IMR-90 (cell line): ENCODE measurements at regions of chr1 and their contacts with region 1.

Region 1: DNA sequence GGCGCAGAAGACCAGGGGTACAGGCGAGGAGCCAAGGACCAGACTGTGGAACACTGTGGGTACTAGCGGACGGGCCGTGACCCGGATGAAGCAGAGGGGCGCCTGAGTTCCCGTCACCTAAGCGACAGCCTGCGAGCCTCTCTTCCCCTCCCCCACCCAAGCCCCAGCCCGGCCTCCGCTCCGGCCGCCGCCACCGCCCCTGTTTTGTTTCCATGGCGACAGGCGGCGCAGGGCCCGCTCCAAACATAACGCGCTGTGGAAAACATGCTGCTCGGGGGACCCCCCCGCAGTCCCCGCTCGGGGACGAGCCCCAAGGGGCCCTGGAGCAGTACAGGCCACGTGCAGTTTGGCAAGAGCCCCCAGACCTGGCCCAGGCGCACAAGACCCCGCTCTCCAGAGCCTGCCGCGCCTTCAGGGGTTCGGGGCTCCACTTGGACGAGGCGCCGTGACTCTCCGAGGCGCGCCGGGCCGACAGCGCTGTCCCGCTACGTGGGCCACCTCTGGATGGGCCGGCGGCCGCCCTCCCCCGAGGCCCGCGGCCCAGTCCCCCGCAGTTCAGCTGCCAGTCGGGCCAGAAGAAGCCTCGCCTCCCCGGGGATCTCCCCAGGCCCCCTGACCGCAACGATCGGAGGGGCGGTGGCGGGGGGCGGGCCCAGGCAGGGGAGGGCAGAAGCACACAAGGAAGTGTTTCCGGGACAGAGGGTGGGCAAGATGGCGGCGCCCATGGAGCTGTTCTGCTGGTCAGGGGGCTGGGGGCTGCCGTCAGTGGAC is at the start of gene MTX1:
- DNase-seq: peak; percentile 68
- ATAC-seq: peak; percentile 88
- H3K4me3 ChIP-seq: peak within 1 kb of the TSS; percentile 100
- H3K27ac ChIP-seq: peak within 1 kb of the TSS; percentile 86
- H3K4me1 ChIP-seq: peaks cover 15% of the 10 kb centered on the region
- H3K27me3 ChIP-seq: no peaks in the 10 kb centered on the region
- CTCF ChIP-seq: no peak
- POLR2A ChIP-seq: peak; percentile 89
- RAD21 ChIP-seq: no peak
- total RNA-seq, gene MTX1: 51.4 and 67.2 TPM in 2 replicates

Region 2: DNA sequence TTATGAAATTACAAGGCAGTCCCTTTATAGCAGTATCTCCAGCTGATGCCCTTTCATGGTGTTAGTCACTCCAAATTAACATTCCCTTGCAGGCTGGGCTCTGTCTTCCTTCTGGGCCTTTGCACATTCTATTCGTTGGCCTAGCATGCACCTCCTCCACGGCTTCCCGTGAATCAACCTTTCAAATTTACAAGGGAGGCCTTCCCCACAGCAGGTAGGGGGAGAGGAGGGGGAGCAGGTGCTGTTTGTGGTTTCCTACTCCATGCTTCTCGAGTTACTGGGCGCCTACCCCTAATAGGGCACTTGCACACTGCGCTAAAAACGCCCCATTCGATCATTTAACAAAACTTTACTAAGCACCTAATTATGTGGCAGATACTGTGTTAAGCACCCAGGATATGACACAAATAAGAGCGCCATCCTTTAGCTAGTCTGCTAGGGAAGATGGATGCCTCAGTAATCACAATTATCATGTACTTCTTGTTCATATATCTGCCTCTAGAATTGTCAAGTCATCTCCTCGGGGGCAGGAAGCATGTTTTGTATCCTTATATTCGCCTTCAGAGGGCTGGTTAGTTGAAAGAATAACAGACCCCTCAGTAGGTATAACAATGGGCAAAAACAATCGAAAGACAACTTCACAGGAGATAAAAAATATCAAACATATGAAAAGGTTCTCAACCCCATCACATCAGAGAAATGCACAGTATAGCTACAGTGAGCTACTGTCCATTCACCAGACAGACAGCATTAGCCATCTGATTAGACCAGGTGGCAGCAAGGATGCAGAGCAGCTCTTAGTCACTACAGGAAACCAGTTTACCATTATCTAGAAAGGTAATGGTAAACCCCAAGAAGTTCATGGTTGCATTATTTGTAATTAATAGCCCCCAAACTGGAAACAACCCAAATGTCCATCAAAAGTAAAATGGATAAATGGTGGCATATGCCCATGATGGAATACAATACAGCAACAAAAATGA is 599.0 kb before region 1 on chr1:
- CTCF ChIA-PET with region 1: no interaction called
- POLR2A ChIA-PET with region 1: no interaction called
- dilution Hi-C with region 1: no loop called
- in situ Hi-C with region 1: no loop called
- intact Hi-C with region 1: no loop called
- DNase-seq: peak; percentile 36
- ATAC-seq: no peak
- H3K4me3 ChIP-seq: no peak overlapping the region
- H3K27ac ChIP-seq: no peak overlapping the region; the same call in 1 of the 2 replicates
- H3K4me1 ChIP-seq: peaks cover 4% of the 10 kb centered on the region
- H3K27me3 ChIP-seq: no peaks in the 10 kb centered on the region
- CTCF ChIP-seq: no peak
- POLR2A ChIP-seq: no peak
- RAD21 ChIP-seq: no peak

Region 3: DNA sequence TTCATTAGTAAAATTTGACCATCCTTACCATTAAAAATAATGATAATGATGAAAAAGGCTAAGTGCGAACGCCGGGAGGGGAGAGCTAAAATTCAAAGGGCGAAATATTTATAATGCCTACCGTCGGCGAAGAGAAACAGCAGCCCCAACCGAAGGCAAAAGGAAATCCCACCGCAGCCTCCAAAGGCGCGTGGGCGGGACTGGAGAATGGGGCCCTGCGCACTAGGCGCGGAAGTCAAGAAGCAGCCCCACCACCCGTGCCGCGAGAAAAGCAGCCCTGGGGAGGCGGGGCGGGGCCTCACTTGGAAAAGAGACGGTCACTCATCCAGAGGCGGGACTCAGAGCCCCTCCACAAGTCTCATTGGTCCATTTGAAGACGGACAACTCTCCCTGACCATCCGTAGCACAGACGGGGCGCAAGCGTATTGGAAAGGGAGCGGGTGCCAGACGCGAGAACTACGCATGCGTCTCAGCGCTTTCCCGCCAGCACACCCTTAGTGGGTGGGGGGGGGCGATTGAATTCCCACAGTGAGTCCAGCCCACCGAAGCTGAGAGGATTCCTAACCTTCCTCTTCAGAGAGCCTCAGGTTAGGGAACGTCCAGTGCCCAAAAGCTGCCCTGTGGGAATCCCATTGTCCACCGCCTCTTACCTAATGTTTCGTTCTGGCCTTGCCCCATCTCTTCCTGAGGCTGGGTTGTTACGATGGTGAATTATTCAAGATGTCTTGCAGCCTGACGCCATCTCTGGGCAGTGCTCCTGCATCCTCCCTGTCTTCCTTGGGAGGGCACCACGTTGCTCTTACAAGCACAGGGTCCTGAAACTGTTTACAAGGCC is 18.8 kb after region 1 on chr1:
- CTCF ChIA-PET with region 1: interaction called, 18 read pairs
- POLR2A ChIA-PET with region 1: interaction called, 3 read pairs
- dilution Hi-C with region 1: no loop called
- in situ Hi-C with region 1: no loop called
- intact Hi-C with region 1: loop called (anchors 1 kb)
- DNase-seq: peak; percentile 99
- ATAC-seq: peak; percentile 94
- H3K4me3 ChIP-seq: peak overlapping the region; percentile 49
- H3K27ac ChIP-seq: peak overlapping the region; percentile 87
- H3K4me1 ChIP-seq: peaks cover 22% of the 10 kb centered on the region
- H3K27me3 ChIP-seq: no peaks in the 10 kb centered on the region
- CTCF ChIP-seq: no peak
- POLR2A ChIP-seq: peak; percentile 85
- RAD21 ChIP-seq: no peak

Region 4: GRCh38 chr1:155244368-155245162 is 35.8 kb after region 1 on chr1:
- CTCF ChIA-PET with region 1: interaction called, 3 read pairs
- POLR2A ChIA-PET with region 1: no interaction called
- dilution Hi-C with region 1: no loop called
- in situ Hi-C with region 1: no loop called
- intact Hi-C with region 1: loop called (anchors 1 kb)
- DNase-seq: peak; percentile 100
- ATAC-seq: peak; percentile 95
- H3K4me3 ChIP-seq: peak overlapping the region; percentile 53
- H3K27ac ChIP-seq: peak overlapping the region; percentile 80
- H3K4me1 ChIP-seq: peaks cover 6% of the 10 kb centered on the region; the same call in 1 of the 2 replicates
- H3K27me3 ChIP-seq: no peaks in the 10 kb centered on the region
- CTCF ChIP-seq: peak; percentile 56
- POLR2A ChIP-seq: peak; percentile 91
- RAD21 ChIP-seq: peak; percentile 32

Region 5: DNA sequence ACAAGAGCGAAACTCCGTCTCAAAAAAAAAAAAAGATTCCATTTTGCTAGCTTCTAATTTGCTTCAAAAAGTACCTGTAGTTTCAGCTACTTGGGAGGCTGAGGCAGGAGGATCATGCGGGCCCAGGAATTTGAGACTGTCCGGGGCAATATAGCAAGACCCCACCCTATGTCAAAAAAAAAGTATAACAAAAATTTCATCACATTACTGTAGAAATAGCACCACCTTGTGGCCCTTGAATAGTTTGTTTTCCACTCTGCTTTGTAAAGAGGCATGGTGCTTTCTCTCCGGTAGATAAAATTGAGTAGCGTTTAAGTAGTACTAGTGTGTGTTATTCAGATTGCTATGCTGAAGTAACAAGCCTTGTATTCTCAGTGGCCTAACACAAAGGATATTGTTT is 383.0 kb after region 1 on chr1:
- CTCF ChIA-PET with region 1: no interaction called
- POLR2A ChIA-PET with region 1: no interaction called
- dilution Hi-C with region 1: no loop called
- in situ Hi-C with region 1: no loop called
- intact Hi-C with region 1: loop called (anchors 10 kb)
- DNase-seq: peak; percentile 68
- ATAC-seq: peak; percentile 76
- H3K4me3 ChIP-seq: no peak overlapping the region
- H3K27ac ChIP-seq: no peak overlapping the region
- H3K4me1 ChIP-seq: no peaks in the 10 kb centered on the region
- H3K27me3 ChIP-seq: no peaks in the 10 kb centered on the region
- CTCF ChIP-seq: peak; percentile 60
- POLR2A ChIP-seq: no peak
- RAD21 ChIP-seq: peak; percentile 69

Region 6: GRCh38 chr1:155970531-155971167 is 761.9 kb after region 1 on chr1:
- CTCF ChIA-PET with region 1: no interaction called
- POLR2A ChIA-PET with region 1: no interaction called
- dilution Hi-C with region 1: no loop called
- in situ Hi-C with region 1: no loop called
- intact Hi-C with region 1: no loop called
- DNase-seq: peak; percentile 88
- ATAC-seq: peak; percentile 80
- H3K4me3 ChIP-seq: no peak overlapping the region
- H3K27ac ChIP-seq: peak overlapping the region; percentile 69
- H3K4me1 ChIP-seq: peaks cover 60% of the 10 kb centered on the region
- H3K27me3 ChIP-seq: no peaks in the 10 kb centered on the region
- CTCF ChIP-seq: no peak
- POLR2A ChIP-seq: no peak
- RAD21 ChIP-seq: peak; percentile 18; the same call in 1 of the 2 replicates